ENCODE measurements at regions of chr20 and their contacts with region 1.

Region 1: GRCh38 chr20:31500527-31500926 is 13.7 kb upstream of the HM13 start:
- H3K4me3 ChIP-seq: no peak overlapping the region
- H3K27ac ChIP-seq: no peak overlapping the region
- H3K4me1 ChIP-seq: 0 out of 2 replicates have a peak, but pooled peaks cover 2% of the 10 kb centered on the region
- CTCF ChIP-seq: no peak

Region 2: GRCh38 chr20:31414380-31414779 is 86.1 kb before region 1 on chr20:
- CTCF ChIA-PET with region 1: interaction called, 53 read pairs
- POLR2A ChIA-PET with region 1: no interaction called
- H3K4me3 ChIP-seq: no peak overlapping the region
- H3K27ac ChIP-seq: no peak overlapping the region
- H3K4me1 ChIP-seq: no peaks in the 10 kb centered on the region
- CTCF ChIP-seq: no peak

Region 3: DNA sequence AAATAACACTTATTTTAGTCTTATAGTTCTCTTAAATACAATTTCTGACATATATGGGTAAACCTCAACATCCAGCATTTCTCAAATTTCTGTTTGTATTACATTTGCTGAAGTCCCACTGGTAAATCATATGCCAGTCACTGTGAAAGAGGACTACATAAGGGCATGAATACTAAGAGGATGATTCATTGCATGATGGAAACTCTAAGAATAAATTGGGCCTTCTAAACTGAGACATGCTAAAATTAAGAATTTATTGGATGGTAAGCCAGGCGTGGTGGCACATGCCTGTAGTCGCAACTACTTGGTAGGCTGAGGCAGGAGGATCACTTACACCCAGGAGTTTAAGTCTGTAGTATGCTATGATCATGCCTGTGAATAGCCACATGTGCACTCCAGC is 48.0 kb before region 1 on chr20:
- CTCF ChIA-PET with region 1: interaction called, 123 read pairs
- POLR2A ChIA-PET with region 1: no interaction called
- H3K4me3 ChIP-seq: no peak overlapping the region
- H3K27ac ChIP-seq: no peak overlapping the region
- H3K4me1 ChIP-seq: no peaks in the 10 kb centered on the region
- CTCF ChIP-seq: no peak

Region 4: GRCh38 chr20:31781945-31782344 is 281.4 kb after region 1 on chr20:
- CTCF ChIA-PET with region 1: no interaction called
- POLR2A ChIA-PET with region 1: no interaction called
- H3K4me3 ChIP-seq: no peak overlapping the region
- H3K27ac ChIP-seq: no peak overlapping the region
- H3K4me1 ChIP-seq: no peaks in the 10 kb centered on the region
- CTCF ChIP-seq: no peak

Measured in HEK293 (cell line).